Heart right ventricle (tissue), 16 donors: ENCODE measurements at regions of chr20 and their contacts with region 1.

Region 1: DNA sequence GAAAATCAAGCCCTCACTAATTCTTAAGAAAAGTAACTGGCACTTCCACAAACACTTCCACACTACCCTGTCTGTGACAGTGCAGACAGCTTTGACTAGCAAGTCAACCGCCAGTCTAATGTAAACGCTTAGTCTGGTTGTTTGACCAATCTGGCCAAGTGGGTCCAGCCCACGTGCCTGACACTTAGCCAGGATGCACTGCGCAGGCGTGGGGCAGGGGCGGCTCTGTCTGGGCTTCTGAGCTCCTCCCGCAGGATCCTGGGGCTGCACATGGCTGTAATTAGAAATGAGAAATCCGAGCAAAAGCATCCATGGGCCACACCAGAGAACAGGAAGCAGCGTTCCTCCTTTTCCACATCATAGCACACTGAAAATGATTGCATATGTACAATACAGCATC is 424.1 kb downstream of the FOXA2 start:
- DNase-seq: no peak
- ATAC-seq: no peak
- H3K4me3 ChIP-seq: no peak overlapping the region
- H3K27ac ChIP-seq: no peak overlapping the region
- H3K4me1 ChIP-seq: no peaks in the 10 kb centered on the region
- H3K27me3 ChIP-seq: peaks cover 0 to 15% (median 0%) of the 10 kb centered on the region in 7 donors
- CTCF ChIP-seq: no peak

Region 2: DNA sequence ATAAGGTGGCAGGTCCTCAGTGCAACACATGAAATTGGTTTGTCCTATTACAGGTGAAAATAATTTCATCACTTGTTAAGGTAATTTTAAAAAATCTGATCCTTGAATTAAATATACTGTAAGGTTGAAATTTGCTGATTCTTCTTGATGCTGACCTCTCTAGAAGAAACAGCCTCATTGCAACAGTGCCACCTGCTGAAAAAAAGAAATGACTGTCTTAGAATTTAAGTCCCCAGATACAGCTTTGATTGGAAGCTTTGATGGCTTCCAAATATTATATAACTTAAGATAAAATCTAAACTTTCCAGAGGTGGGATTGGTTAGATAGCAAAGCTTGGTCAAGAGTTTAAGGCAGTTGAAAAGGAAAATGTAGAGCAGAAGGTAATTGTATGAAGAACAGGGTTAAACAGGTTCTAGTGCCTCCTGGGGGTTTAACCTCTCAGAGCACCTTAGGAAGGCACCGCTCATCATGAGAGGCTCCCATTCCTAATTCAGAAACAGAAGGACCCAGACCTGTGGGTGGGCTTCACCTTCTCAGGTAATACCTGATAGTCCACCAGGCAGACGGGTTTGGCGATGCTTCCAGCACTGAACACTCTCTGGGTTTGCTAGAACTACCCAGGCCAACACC is 53.8 kb before region 1 on chr20:
- intact Hi-C with region 1: loop called in 1 of 10 experiments (anchors 10 kb)
- DNase-seq: no peak
- ATAC-seq: no peak
- H3K4me3 ChIP-seq: no peak overlapping the region
- H3K27ac ChIP-seq: no peak overlapping the region
- H3K4me1 ChIP-seq: no peaks in the 10 kb centered on the region
- H3K27me3 ChIP-seq: no peaks in the 10 kb centered on the region
- CTCF ChIP-seq: peak in 7 of 9 donors; percentile 32 to 59 (median 46)

Region 3: GRCh38 chr20:22127587-22127986 is 32.7 kb before region 1 on chr20:
- intact Hi-C with region 1: loop called in 1 of 10 experiments (anchors 5 kb)
- DNase-seq: no peak
- ATAC-seq: no peak
- H3K4me3 ChIP-seq: no peak overlapping the region
- H3K27ac ChIP-seq: no peak overlapping the region
- H3K4me1 ChIP-seq: no peaks in the 10 kb centered on the region
- H3K27me3 ChIP-seq: no peaks in the 10 kb centered on the region
- CTCF ChIP-seq: no peak